Activated CD8-positive, alpha-beta memory T cell treated with anti-CD3 and anti-CD28 coated beads, Interleukin-2, amount 10 ng/mL, durations not matched to agents 7 days and 5 days (primary cell): ENCODE measurements at regions of chr6 and their contacts with region 1.

Region 1: DNA sequence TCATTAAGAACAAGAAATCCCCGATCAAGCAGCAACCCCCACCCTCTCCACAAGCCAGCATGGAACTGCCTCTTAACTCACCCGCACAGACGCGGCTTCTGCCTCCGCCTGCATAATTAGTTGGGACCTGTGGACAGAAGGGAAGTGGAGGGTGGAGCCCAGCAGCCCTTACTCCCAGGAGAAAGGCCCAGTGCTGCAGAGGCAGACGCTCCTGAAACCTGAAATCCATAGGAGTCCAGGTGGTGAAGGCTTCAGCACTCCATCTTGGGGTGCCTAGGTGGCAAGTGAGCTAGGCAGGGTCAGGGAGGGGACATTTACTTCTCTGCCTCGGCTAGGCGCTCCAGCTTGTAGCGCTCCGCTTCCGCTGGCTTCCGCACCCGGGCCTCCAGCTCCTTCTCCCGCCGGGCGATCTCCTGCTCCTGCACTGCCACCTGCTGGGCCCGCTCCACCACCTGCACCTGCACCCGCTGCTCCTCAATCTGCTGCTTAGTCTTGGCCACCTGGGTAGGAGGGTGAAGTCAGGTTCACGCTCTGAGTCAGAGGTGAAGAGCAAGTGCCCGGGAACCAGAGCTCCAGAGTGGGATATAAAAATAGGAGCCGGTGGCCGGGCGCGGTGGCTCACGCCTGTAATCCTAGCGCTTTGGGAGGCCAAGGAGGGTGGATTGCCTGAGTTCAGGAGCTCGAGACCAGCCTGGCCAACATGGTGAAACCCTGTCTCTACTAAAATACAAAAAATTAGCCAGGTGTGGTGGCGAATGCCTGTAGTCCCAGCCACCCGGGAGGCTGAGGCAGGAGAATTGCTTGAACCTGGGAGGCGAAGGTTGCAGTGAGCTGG is 10.7 kb downstream of the TUBB start:
- DNase-seq: peak; percentile 91
- ATAC-seq: peak; percentile 94
- H3K4me3 Mint-ChIP-seq: no peak overlapping the region
- H3K27ac Mint-ChIP-seq: peak overlapping the region; percentile 61
- H3K4me1 Mint-ChIP-seq: peaks cover 38% of the 10 kb centered on the region
- H3K27me3 Mint-ChIP-seq: no peaks in the 10 kb centered on the region

Region 2: DNA sequence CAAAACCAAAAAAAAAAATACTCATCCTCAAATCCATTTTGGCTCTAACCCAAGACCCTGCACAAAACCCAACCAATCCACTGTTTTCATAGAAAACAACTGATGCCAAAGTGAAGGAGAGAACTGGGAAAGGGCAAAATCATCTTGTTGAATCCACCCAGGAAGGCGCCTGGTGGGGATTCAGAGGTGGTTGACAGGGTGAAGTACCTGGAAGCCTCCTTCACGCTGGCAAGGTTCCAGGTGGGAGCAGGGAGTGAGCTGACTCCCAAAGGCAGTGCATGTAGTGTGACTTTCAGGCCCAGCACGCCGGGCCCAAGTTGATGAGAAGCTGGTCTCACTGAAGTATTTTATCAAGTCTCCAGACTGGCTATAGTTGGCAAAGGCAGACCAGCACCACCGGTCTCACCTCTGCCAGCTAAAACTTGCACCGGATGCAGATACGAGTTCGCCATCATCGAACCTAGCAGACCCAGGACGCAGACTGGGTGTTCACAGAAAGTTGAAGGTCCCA is 130.3 kb before region 1 on chr6:
- CTCF ChIA-PET with region 1: interaction called, 21 read pairs
- DNase-seq: no peak
- ATAC-seq: no peak
- H3K4me3 Mint-ChIP-seq: no peak overlapping the region
- H3K27ac Mint-ChIP-seq: no peak overlapping the region
- H3K4me1 Mint-ChIP-seq: peaks cover 12% of the 10 kb centered on the region
- H3K27me3 Mint-ChIP-seq: no peaks in the 10 kb centered on the region

Region 3: GRCh38 chr6:30626484-30627366 is 104.1 kb before region 1 on chr6 and contains the start of gene ATAT1:
- CTCF ChIA-PET with region 1: interaction called, 18 read pairs
- DNase-seq: peak; percentile 92
- ATAC-seq: peak; percentile 99
- H3K4me3 Mint-ChIP-seq: peak within 1 kb of the TSS; percentile 90
- H3K27ac Mint-ChIP-seq: peak within 1 kb of the TSS; percentile 97
- H3K4me1 Mint-ChIP-seq: peaks cover 30% of the 10 kb centered on the region
- H3K27me3 Mint-ChIP-seq: no peaks in the 10 kb centered on the region
- total RNA-seq, gene ATAT1: 7.5 to 8.4 TPM

Region 4: GRCh38 chr6:30711758-30712380 is 18.9 kb before region 1 on chr6:
- CTCF ChIA-PET with region 1: interaction called, 10 read pairs
- DNase-seq: peak; percentile 69
- ATAC-seq: peak; percentile 81
- H3K4me3 Mint-ChIP-seq: peak overlapping the region; percentile 53
- H3K27ac Mint-ChIP-seq: peak overlapping the region; percentile 90
- H3K4me1 Mint-ChIP-seq: peaks cover 53% of the 10 kb centered on the region
- H3K27me3 Mint-ChIP-seq: no peaks in the 10 kb centered on the region

Region 5: GRCh38 chr6:30742316-30743098 is 11.7 kb after region 1 on chr6 and contains the start of gene FLOT1:
- CTCF ChIA-PET with region 1: interaction called, 35 read pairs
- DNase-seq: peak; percentile 96
- ATAC-seq: peak; percentile 84
- H3K4me3 Mint-ChIP-seq: peak within 1 kb of the TSS; percentile 95
- H3K27ac Mint-ChIP-seq: peak within 1 kb of the TSS; percentile 83
- H3K4me1 Mint-ChIP-seq: peaks cover 59% of the 10 kb centered on the region
- H3K27me3 Mint-ChIP-seq: no peaks in the 10 kb centered on the region
- total RNA-seq, gene FLOT1: 165 to 184 TPM